ENCODE measurements at regions of chr4 and their contacts with region 1.

Region 1: DNA sequence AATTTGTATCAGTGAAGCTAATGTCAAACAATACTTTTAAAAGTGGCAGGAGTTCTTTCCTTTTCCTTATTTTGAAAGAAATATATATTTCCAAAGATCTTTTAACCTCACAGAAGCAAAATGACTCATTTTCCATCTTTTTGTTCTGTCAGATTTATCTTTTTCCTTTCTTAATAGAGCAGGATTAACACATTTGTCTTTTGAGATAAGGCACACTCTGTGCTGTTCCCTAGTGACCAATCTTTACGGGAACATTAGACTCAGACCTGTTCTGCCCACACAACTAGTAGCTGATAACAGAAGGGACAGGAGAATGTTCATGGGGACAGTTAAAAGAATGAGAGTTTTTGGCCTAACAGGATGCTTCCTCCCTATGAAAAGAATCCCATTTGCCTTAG is 381.2 kb downstream of the STPG2 start:
- DNase-seq: no peak
- ATAC-seq: no peak
- H3K4me3 ChIP-seq: no peak overlapping the region
- H3K27ac ChIP-seq: no peak overlapping the region
- H3K4me1 ChIP-seq: no peaks in the 10 kb centered on the region
- H3K27me3 ChIP-seq: no peaks in the 10 kb centered on the region
- CTCF ChIP-seq: no peak
- EP300 ChIP-seq: no peak
- POLR2A ChIP-seq: no peak
- RAD21 ChIP-seq: no peak

Region 2: DNA sequence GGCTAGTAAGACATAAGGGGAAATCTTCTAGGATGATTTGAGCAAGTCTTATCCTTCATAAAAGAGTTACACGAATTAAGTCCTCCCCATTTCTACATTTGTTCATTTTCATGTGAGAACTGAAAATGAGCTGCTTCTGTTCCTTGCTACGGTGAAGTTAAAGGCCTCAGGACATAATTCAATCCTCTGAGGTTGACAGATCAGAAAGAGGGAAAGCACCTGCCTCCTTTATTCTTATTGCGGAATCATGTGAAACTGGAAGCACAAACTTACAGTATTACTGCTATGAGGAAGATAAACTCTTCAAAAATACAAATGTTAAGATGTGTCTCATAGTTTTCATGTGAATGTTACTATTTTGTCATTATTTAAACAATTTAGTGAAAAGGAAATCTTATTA is 14.2 kb before region 1 on chr4:
- CTCF ChIA-PET with region 1: no interaction called
- POLR2A ChIA-PET with region 1: no interaction called
- in situ Hi-C with region 1: no loop called
- intact Hi-C with region 1: loop called (anchors 1 kb)
- DNase-seq: no peak
- ATAC-seq: no peak
- H3K4me3 ChIP-seq: no peak overlapping the region
- H3K27ac ChIP-seq: no peak overlapping the region
- H3K4me1 ChIP-seq: no peaks in the 10 kb centered on the region
- H3K27me3 ChIP-seq: no peaks in the 10 kb centered on the region; a peak in 1 of 5 replicates
- CTCF ChIP-seq: no peak
- EP300 ChIP-seq: no peak
- POLR2A ChIP-seq: no peak
- RAD21 ChIP-seq: no peak